ENCODE measurements at regions of chr22 and their contacts with region 1.

Region 1: GRCh38 chr22:21712894-21713712 is 22.5 kb downstream of the YPEL1 start:
- DNase-seq: peak; percentile 75
- ATAC-seq: peak; percentile 94
- H3K4me3 ChIP-seq: no peak overlapping the region
- H3K4me3 Mint-ChIP-seq: peak overlapping the region; percentile 49
- H3K27ac ChIP-seq: no peak overlapping the region
- H3K27ac Mint-ChIP-seq: peak overlapping the region; percentile 50
- H3K4me1 ChIP-seq: peaks cover 0 to 7% of the 10 kb centered on the region in 2 donors
- H3K4me1 Mint-ChIP-seq: peaks cover 8% of the 10 kb centered on the region
- H3K27me3 ChIP-seq: no peaks in the 10 kb centered on the region
- H3K27me3 Mint-ChIP-seq: no peaks in the 10 kb centered on the region
- CTCF ChIP-seq: peak; percentile 83

Region 2: GRCh38 chr22:20833225-20833665 is 879.9 kb before region 1 on chr22:
- CTCF ChIA-PET with region 1: no interaction called
- POLR2A ChIA-PET with region 1: no interaction called
- intact Hi-C with region 1: no loop called
- DNase-seq: no peak
- ATAC-seq: no peak
- H3K4me3 ChIP-seq: no peak overlapping the region
- H3K4me3 Mint-ChIP-seq: no peak overlapping the region
- H3K27ac ChIP-seq: no peak overlapping the region
- H3K27ac Mint-ChIP-seq: no peak overlapping the region
- H3K4me1 ChIP-seq: peaks cover 6 to 7% of the 10 kb centered on the region in 2 donors
- H3K4me1 Mint-ChIP-seq: peaks cover 13% of the 10 kb centered on the region
- H3K27me3 ChIP-seq: no peaks in the 10 kb centered on the region
- H3K27me3 Mint-ChIP-seq: no peaks in the 10 kb centered on the region
- CTCF ChIP-seq: no peak

Region 3: DNA sequence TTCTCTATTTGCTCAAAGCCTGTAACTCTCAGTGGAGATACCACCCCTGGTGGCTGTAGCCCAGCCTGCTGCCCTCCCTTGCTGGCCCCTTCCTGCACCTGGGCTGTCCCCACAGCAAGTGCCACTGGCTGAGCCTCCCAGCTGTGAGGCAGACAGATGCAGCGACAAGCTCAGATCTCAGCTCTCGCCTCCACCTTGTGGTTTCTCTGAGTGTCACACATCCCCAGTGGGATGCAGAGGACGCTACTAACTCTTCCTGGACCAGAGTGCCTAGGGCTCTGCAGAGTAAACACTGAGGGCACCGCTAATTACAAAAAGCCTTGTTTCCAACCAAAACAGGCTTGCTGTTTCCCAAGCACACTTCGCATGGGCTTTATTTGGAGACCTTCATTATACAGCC is 13.5 kb after region 1 on chr22:
- CTCF ChIA-PET with region 1: interaction called, 4 read pairs
- POLR2A ChIA-PET with region 1: no interaction called
- intact Hi-C with region 1: loop called (anchors 2 kb)
- DNase-seq: no peak
- ATAC-seq: peak; percentile 67
- H3K4me3 ChIP-seq: no peak overlapping the region
- H3K4me3 Mint-ChIP-seq: no peak overlapping the region
- H3K27ac ChIP-seq: no peak overlapping the region
- H3K27ac Mint-ChIP-seq: peak overlapping the region; percentile 10
- H3K4me1 ChIP-seq: peaks cover 12 to 21% of the 10 kb centered on the region in 2 donors
- H3K4me1 Mint-ChIP-seq: peaks cover 24% of the 10 kb centered on the region
- H3K27me3 ChIP-seq: no peaks in the 10 kb centered on the region
- H3K27me3 Mint-ChIP-seq: no peaks in the 10 kb centered on the region
- CTCF ChIP-seq: peak; percentile 32

Region 4: DNA sequence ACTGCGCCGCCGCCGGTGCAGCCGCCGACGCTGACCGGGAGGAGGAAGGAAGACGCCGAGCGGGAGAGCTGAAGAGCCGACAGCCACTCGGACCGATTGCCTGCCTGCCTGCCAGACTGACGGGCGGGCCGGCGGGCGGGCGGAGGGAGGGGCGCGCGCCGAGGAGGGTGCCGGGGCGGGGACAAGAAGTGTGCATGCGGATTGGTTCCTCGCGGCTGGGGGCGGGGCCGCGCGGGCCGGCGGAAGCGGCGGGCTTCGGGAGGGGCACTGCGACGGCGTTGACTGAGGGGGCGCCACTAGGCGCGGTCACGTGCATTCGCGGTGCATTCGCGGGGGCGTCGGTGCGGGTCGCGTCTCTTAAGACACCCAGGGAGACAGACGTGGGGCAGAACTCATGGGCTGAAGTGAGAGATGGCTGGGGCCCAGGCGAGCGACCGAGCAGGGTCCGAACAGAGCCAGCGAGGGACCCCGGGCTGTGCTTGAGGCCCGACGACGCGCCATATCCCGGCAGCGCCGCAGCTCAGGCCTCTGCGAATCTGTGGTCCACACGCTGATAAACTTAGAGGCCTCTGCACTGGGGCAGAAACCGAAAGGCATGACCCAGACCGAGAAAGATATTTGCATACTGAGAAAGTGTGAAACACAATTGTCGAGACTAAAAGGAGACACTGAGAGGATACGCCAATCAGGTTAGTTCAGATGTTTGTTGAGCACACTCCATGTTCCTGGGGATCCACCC is 154.6 kb after region 1 on chr22 and contains the start of gene MAPK1:
- CTCF ChIA-PET with region 1: no interaction called
- POLR2A ChIA-PET with region 1: no interaction called
- intact Hi-C with region 1: no loop called
- DNase-seq: peak; percentile 98
- ATAC-seq: peak; percentile 90
- H3K4me3 ChIP-seq: peak within 1 kb of the TSS; percentile 64 to 93 (median 91)
- H3K4me3 Mint-ChIP-seq: peak within 1 kb of the TSS; percentile 94
- H3K27ac ChIP-seq: peak within 1 kb of the TSS; percentile 93 to 100
- H3K27ac Mint-ChIP-seq: peak within 1 kb of the TSS; percentile 93
- H3K4me1 ChIP-seq: peaks cover 39 to 40% of the 10 kb centered on the region in 2 donors
- H3K4me1 Mint-ChIP-seq: peaks cover 45% of the 10 kb centered on the region
- H3K27me3 ChIP-seq: no peaks in the 10 kb centered on the region
- H3K27me3 Mint-ChIP-seq: no peaks in the 10 kb centered on the region
- CTCF ChIP-seq: peak; percentile 39
- total RNA-seq, gene MAPK1: 145 and 155 TPM in 2 replicates

Region 5: DNA sequence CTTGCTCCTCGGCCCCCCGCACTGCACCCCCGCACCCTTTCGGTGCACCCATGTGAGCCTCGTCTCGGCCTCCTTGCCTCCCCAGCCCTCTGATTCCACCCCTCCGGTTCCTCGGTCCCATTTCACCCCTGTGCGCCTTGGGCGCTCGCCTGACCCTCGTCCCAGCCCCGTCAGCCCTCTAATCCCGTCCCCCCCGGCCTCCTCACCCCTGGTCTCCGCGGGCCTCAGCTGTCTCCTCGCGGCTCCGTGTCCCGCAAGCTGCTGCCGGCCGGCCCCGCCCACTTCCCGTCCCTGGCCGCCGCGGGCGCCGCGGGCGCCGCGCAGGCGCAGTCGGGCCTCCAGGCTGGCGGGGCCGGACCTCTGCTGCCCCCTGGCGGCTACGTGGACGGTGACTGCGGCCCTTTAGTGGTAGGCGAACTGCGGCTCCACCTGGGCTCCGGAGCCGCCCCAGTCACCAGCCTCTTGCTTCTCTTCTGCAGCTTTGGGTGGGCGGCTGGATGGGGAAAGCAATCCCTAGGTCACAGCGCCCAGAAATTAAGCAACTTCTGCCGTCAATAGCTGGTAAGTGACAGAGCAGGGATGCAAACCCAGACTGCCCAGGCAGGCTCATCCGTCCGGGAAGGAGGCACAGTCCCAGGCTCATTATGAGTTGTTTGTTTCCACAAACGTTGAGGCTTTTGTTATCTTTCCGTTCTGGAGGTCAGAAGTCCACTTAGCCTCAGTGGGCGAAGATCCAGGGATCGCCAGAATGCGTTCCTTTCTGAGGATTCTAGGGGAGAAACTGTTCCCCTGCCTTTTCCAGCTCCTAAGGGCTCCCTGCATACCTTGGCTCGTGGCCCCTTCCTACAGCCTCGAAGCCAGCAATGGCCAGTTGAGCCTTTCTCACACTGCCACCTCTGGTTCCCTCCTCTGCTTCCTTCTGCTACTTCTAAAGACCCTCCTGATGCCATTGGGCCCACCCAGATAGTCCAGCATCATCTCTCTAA is 239.8 kb after region 1 on chr22 and contains the start of gene PPM1F:
- CTCF ChIA-PET with region 1: interaction called, 8 read pairs
- POLR2A ChIA-PET with region 1: interaction called, 6 read pairs
- intact Hi-C with region 1: loop called (anchors 2 kb)
- DNase-seq: peak; percentile 94
- ATAC-seq: peak; percentile 85
- H3K4me3 ChIP-seq: peak within 1 kb of the TSS; percentile 45 to 81 (median 74)
- H3K4me3 Mint-ChIP-seq: peak within 1 kb of the TSS; percentile 92
- H3K27ac ChIP-seq: peak within 1 kb of the TSS in 1 of 2 donors; percentile 53
- H3K27ac Mint-ChIP-seq: peak within 1 kb of the TSS; percentile 82
- H3K4me1 ChIP-seq: peaks cover 10 to 12% of the 10 kb centered on the region in 2 donors
- H3K4me1 Mint-ChIP-seq: peaks cover 19% of the 10 kb centered on the region
- H3K27me3 ChIP-seq: no peaks in the 10 kb centered on the region
- H3K27me3 Mint-ChIP-seq: no peaks in the 10 kb centered on the region
- CTCF ChIP-seq: peak; percentile 80
- total RNA-seq, gene PPM1F: 30.0 and 33.1 TPM in 2 replicates